ENCODE measurements at regions of chr3 and their contacts with region 1.

Region 1: GRCh38 chr3:98812851-98813374 is 49.8 kb downstream of the ST3GAL6 start:
- DNase-seq: peak in 1 of 35 experiments; percentile 9
- ATAC-seq: peak in 1 of 4 experiments; percentile 40
- H3K4me3 ChIP-seq: no peak overlapping the region
- H3K4me3 Mint-ChIP-seq: no peak overlapping the region
- H3K27ac ChIP-seq: no peak overlapping the region
- H3K27ac Mint-ChIP-seq: no peak overlapping the region
- H3K4me1 ChIP-seq: no peaks in the 10 kb centered on the region
- H3K4me1 Mint-ChIP-seq: no peaks in the 10 kb centered on the region
- H3K27me3 ChIP-seq: no peaks in the 10 kb centered on the region
- H3K27me3 Mint-ChIP-seq: no peaks in the 10 kb centered on the region

Region 2: DNA sequence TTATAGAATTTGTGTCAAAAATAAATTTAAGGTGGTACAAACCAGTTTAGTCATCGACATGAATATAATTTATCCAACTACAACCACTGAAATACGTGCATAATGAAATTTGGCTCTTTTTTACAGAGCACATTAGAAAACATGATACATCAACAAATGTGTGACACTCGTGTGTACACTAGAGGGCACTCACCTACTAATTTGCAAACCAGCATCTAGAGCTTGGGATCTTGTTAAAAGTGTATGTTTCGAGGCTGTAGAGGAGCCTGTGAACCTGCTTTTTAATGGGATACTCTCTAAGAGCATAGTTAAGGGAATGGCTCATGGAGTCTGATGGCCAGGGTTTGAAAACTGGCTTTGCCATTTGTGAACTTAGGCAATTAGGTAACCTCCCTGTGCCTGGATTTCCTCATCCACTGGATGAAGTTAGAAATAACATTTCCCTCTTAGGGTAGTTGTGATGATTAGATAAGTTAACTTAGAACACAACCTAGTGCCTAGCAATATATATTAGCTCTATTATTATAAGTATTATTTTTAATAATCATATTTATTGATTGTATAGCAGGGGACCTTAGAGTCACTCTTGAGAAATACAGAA is 210.7 kb before region 1 on chr3:
- CTCF ChIA-PET with region 1: interaction called, 3 to 11 read pairs
- POLR2A ChIA-PET with region 1: no interaction called
- DNase-seq: peak in 6 of 35 experiments; percentile 2 to 51 (median 14)
- ATAC-seq: peak in 3 of 4 experiments; percentile 58 to 70 (median 63)
- H3K4me3 ChIP-seq: no peak overlapping the region
- H3K4me3 Mint-ChIP-seq: no peak overlapping the region
- H3K27ac ChIP-seq: no peak overlapping the region
- H3K27ac Mint-ChIP-seq: no peak overlapping the region
- H3K4me1 ChIP-seq: no peaks in the 10 kb centered on the region
- H3K4me1 Mint-ChIP-seq: no peaks in the 10 kb centered on the region
- H3K27me3 ChIP-seq: peaks cover 0 to 5% of the 10 kb centered on the region in 2 experiments
- H3K27me3 Mint-ChIP-seq: peaks cover 10 to 13% of the 10 kb centered on the region in 2 donors

Measured in T-cell (primary cell).